A673 (cell line): ENCODE measurements at regions of chr20 and their contacts with region 1.

Region 1: DNA sequence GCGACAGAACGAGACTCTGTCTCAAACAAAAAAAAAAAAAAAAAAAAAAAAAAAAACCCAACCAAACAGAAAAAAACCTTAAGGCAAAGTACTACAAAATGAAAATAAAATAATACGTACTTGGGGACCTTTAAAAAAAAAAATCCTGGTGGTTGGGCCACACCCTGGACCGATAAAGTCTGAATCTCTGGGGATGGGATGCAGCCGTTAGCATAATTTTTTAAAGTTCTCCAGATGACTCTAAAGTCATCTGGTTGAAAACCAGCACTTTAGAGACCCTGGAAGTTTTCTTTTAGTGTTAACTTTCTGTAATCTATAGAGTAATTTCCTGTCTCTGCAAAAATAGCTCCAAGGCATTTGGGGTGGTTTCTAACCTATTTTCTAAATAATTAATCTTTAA is 142.9 kb upstream of the SALL4 start:
- DNase-seq: peak; percentile 27
- H3K4me3 ChIP-seq: no peak overlapping the region
- H3K27ac ChIP-seq: no peak overlapping the region
- H3K4me1 ChIP-seq: no peaks in the 10 kb centered on the region
- H3K27me3 ChIP-seq: no peaks in the 10 kb centered on the region
- CTCF ChIP-seq: no peak

Region 2: DNA sequence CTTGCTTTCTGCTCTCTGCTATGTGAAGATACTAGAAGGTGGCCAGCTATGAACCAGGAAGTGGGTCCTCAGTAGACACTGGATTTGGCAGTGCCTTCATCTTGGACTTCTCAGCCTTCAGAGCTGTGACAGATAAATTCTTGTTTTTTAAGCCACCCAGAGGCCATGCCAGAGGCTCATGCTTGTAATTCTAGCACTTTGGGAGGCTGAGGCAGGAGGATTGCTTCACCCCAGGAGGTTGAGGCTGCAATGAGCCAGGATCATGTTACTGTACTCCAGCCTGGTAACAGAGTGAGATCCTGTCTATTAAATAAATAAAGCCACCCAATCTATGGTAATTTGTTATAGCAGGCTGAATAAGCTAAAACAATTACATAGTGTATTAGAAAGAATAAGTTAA is 42.7 kb after region 1 on chr20:
- CTCF ChIA-PET with region 1: no interaction called
- POLR2A ChIA-PET with region 1: interaction called, 10 read pairs
- intact Hi-C with region 1: no loop called
- DNase-seq: no peak
- H3K4me3 ChIP-seq: no peak overlapping the region
- H3K27ac ChIP-seq: no peak overlapping the region
- H3K4me1 ChIP-seq: peaks cover 22% of the 10 kb centered on the region
- H3K27me3 ChIP-seq: no peaks in the 10 kb centered on the region
- CTCF ChIP-seq: no peak

Region 3: DNA sequence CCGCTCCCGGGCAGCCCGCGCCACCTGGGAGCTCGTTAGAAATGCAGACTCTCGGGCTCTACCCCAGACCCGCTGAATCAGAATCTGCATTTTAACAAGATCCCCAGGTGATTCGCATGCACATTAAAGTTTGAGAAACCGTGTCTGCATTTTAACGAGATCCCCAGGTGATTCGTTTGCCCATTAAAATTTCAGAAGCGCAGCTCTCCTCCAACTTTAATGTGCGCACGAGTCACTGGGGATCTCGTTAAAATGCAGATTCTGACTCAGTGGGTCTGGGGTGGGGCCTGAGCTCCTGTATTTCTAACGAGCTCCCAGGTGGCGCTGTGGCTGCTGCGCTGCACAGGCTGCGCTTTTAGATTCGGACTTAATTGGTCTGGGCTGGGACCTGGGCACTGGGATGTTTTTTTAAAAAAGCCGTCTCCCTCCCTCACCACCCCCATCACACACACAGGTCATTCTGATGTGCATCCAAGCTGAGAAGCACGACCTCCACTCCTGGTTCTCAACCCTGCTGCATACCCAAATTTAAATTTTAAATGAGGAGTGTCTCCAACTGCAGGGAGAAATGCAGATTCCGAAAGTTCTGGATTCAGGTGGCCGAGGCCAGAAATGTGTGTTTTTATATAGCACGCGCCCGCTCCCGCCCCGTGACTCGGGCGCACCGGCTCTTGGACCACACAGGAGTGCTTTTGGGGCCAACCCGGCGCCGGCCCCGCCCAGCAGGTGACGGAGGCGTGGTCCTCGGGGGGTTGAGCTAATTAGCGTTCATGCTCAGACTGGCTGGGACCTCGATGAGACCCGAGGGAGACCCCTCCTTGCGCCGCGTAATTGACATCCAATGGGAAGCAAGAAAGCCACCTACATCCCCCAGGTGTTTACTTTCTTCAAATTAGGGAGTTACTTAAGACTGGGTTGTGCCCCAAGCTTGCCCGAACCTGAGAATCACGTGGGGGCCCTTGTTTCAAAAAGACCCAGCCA is 160.6 kb after region 1 on chr20:
- CTCF ChIA-PET with region 1: no interaction called
- POLR2A ChIA-PET with region 1: interaction called, 10 read pairs
- intact Hi-C with region 1: no loop called
- DNase-seq: peak; percentile 18
- H3K4me3 ChIP-seq: peak overlapping the region; percentile 67
- H3K27ac ChIP-seq: no peak overlapping the region
- H3K4me1 ChIP-seq: peaks cover 4% of the 10 kb centered on the region
- H3K27me3 ChIP-seq: no peaks in the 10 kb centered on the region
- CTCF ChIP-seq: peak; percentile 39